ENCODE measurements at regions of chr18 and their contacts with region 1.

Region 1: GRCh38 chr18:60100778-60101177 is 201.0 kb downstream of the PMAIP1 start:
- DNase-seq: no peak
- ATAC-seq: no peak
- H3K4me3 ChIP-seq: no peak overlapping the region
- H3K4me3 Mint-ChIP-seq: no peak overlapping the region
- H3K27ac ChIP-seq: no peak overlapping the region
- H3K27ac Mint-ChIP-seq: no peak overlapping the region
- H3K4me1 ChIP-seq: no peaks in the 10 kb centered on the region
- H3K4me1 Mint-ChIP-seq: no peaks in the 10 kb centered on the region
- H3K27me3 ChIP-seq: no peaks in the 10 kb centered on the region
- H3K27me3 Mint-ChIP-seq: peaks cover 11% of the 10 kb centered on the region
- CTCF ChIP-seq: no peak

Region 2: DNA sequence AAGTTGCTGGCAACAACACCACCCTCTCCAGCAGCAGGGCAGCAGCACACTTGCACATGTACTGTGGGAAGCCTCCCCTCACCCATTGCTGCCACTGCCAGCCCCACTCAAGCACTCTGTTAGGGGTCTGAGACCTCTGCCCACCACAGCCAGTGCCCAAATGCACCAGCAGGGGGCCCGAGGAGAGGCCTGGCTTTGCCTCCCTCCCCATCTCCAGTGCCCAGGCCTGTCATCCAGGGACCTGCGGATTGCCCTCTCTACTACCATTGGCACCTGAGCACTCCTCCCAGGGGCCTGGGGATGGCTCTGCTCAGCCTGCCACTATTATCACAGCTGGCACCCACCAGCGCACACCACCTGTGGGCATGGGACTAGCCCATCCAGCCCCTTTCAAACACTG is 25.3 kb before region 1 on chr18:
- CTCF ChIA-PET with region 1: no interaction called
- POLR2A ChIA-PET with region 1: no interaction called
- intact Hi-C with region 1: no loop called
- DNase-seq: no peak
- ATAC-seq: no peak
- H3K4me3 ChIP-seq: no peak overlapping the region
- H3K4me3 Mint-ChIP-seq: no peak overlapping the region
- H3K27ac ChIP-seq: no peak overlapping the region
- H3K27ac Mint-ChIP-seq: no peak overlapping the region
- H3K4me1 ChIP-seq: no peaks in the 10 kb centered on the region
- H3K4me1 Mint-ChIP-seq: no peaks in the 10 kb centered on the region
- H3K27me3 ChIP-seq: peaks cover 0 to 7% (median 3%) of the 10 kb centered on the region in 4 experiments
- H3K27me3 Mint-ChIP-seq: peaks cover 24% of the 10 kb centered on the region
- CTCF ChIP-seq: no peak

Region 3: DNA sequence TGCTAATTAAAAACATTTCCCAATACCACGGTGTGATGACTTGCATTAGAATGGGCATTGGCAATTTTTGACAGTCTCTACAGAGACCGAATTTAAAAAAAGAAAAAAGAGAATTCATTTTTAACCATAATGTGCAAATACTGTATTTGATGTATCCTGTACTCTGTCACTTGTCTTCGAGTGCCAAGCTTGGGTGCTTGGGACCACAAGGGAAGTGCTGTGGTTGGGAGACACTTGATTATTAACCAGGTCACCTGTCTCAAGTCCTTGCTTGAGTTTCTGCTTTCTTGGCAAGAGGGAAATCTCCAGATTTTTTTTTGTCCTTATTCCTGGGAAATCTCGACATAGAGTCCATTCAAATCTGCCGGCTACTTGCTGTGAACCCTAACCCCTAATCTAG is 62.8 kb after region 1 on chr18:
- CTCF ChIA-PET with region 1: no interaction called
- POLR2A ChIA-PET with region 1: no interaction called
- intact Hi-C with region 1: loop called (anchors 10 kb)
- DNase-seq: no peak
- ATAC-seq: no peak
- H3K4me3 ChIP-seq: no peak overlapping the region
- H3K4me3 Mint-ChIP-seq: no peak overlapping the region
- H3K27ac ChIP-seq: no peak overlapping the region
- H3K27ac Mint-ChIP-seq: no peak overlapping the region
- H3K4me1 ChIP-seq: no peaks in the 10 kb centered on the region
- H3K4me1 Mint-ChIP-seq: no peaks in the 10 kb centered on the region
- H3K27me3 ChIP-seq: no peaks in the 10 kb centered on the region
- H3K27me3 Mint-ChIP-seq: no peaks in the 10 kb centered on the region
- CTCF ChIP-seq: no peak

Measured in B cell (primary cell).